ENCODE measurements at regions of chr7 and their contacts with region 1.

Region 1: GRCh38 chr7:74289659-74290514 is 680 bp downstream of the CLIP2 start:
- DNase-seq: peak; percentile 71
- H3K4me3 Mint-ChIP-seq: peak overlapping the region; percentile 44
- H3K27ac Mint-ChIP-seq: no peak overlapping the region
- H3K4me1 Mint-ChIP-seq: peaks cover 17% of the 10 kb centered on the region
- H3K27me3 Mint-ChIP-seq: peaks cover 31% of the 10 kb centered on the region

Region 2: DNA sequence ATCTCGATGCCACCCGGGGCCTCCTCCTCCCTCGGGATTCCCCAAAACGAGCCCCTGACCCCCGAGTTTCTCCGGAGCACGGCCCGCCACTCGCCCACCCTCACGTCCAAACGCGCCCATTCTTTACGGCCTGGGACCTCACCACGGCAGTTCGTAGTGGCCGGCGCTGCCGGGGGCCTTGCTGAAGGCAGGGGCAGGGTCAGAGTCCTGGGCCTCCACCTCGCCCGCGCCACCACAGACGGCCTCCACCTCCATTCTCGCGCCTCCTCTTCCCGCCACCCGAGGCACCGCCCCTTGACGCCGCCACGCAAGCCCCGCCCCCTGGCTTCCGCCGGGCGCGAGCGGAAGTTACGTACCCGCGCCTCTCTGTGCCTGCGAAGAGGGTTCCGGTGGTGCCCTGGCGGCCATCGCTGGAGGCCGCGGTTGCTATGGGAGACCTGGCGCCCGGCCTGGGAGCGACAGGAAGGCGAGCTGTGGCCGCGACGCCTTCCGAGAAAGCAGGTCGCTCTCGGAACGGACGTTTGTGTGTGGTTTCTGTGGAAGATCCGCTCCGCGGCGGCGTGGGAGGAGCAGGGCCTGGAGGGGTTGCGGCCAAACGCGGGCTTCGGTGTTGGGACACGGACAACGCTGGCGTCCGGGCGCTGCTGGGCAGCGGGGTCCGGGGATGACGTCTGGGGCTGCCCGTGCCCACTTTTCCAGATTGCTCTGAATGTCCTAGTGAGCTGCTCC is 35.6 kb before region 1 on chr7 and contains the start of gene RFC2:
- intact Hi-C with region 1: loop called (anchors 1 kb)
- DNase-seq: peak; percentile 100
- H3K4me3 Mint-ChIP-seq: peak within 1 kb of the TSS; percentile 98
- H3K27ac Mint-ChIP-seq: peak within 1 kb of the TSS; percentile 96
- H3K4me1 Mint-ChIP-seq: peaks cover 23% of the 10 kb centered on the region
- H3K27me3 Mint-ChIP-seq: no peaks in the 10 kb centered on the region
- total RNA-seq, gene RFC2: 88.0 and 94.7 TPM in 2 replicates

Region 3: DNA sequence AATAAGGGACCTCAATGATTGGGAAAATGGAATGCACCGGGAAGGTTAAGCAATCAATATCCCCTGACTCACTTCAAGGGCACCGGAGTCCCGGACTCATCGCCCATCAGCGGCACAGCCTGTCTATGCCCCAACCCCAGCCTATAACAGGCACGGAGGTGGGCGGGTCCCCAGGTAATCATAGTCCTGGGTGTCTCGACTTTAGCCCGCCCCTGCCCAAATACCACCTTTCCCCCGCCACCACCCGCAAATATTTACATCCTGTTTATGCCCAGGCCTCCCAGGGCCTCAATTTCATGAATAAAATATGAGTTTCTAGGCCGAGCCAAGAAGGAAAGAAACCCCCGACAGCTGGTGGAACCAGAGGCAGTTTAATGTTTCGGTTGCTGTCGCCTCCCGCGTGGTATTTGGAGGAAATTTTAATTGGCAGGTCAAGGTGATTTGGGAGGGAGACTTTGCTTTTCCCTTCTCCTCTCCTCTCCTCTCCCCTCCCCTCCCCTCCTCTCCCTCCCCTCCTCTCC is 20.1 kb before region 1 on chr7:
- intact Hi-C with region 1: loop called (anchors 1 kb)
- DNase-seq: peak; percentile 86
- H3K4me3 Mint-ChIP-seq: peak overlapping the region; percentile 84
- H3K27ac Mint-ChIP-seq: no peak overlapping the region
- H3K4me1 Mint-ChIP-seq: peaks cover 10% of the 10 kb centered on the region
- H3K27me3 Mint-ChIP-seq: peaks cover 8% of the 10 kb centered on the region

Measured in activated CD4-positive, alpha-beta T cell treated with anti-CD3 and anti-CD28 coated beads, Interleukin-2, amount 10 ng/mL, durations not matched to agents 24 days and 14 days (primary cell).